SK-N-SH (cell line): ENCODE measurements at regions of chr12 and their contacts with region 1.

Region 1: GRCh38 chr12:104201238-104202001 is 14.2 kb upstream of the TXNRD1 start:
- DNase-seq: peak; percentile 67
- H3K4me3 ChIP-seq: no peak overlapping the region
- H3K27ac ChIP-seq: no peak overlapping the region
- H3K4me1 ChIP-seq: no peaks in the 10 kb centered on the region
- H3K27me3 ChIP-seq: no peaks in the 10 kb centered on the region
- CTCF ChIP-seq: peak; percentile 85
- EP300 ChIP-seq: no peak
- RAD21 ChIP-seq: peak; percentile 94

Region 2: GRCh38 chr12:104286538-104287482 is 85.4 kb after region 1 on chr12:
- CTCF ChIA-PET with region 1: interaction called, 13 read pairs
- POLR2A ChIA-PET with region 1: no interaction called
- DNase-seq: peak; percentile 82
- H3K4me3 ChIP-seq: peak overlapping the region; percentile 74 to 75
- H3K27ac ChIP-seq: peak overlapping the region; percentile 95 to 97
- H3K4me1 ChIP-seq: peaks cover 16 to 17% of the 10 kb centered on the region in 2 experiments; a peak in 3 of 4 replicates
- H3K27me3 ChIP-seq: no peaks in the 10 kb centered on the region
- CTCF ChIP-seq: no peak
- EP300 ChIP-seq: peak in 1 of 2 experiments; percentile 56; a peak in 2 of 4 replicates
- RAD21 ChIP-seq: no peak

Region 3: DNA sequence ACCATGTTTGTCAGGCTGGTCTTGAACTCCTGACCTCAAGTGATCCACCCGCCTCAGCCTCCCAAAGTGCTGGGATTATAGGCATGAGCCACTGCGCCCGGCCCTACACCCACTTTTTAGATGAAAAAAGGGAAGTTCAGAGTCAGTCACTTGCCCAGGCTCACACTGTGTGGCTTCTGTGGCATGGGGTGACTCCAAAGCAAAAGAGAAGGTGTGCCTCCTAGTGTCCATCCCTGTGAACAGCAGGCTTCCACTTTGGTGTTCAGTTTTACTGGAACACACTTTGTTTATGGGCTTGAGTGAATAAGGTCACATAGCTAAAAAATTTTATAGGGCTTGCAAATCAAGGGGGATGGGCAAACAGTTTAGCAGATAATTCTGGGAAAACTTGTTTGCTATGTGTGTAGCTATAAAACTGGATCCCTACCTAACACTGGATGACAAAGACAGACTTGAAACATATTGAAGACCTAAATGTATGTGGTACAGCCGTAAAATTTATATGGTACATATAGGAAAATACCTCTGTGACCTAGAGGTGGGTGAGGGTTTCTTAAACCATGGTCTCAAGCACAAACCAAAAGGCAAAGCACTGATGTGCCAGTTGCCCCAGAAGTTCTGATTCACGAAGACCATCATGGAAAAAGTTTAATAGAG is 157.1 kb after region 1 on chr12:
- CTCF ChIA-PET with region 1: interaction called, 13 read pairs
- POLR2A ChIA-PET with region 1: no interaction called
- DNase-seq: peak; percentile 58
- H3K4me3 ChIP-seq: no peak overlapping the region; a peak in 1 of 4 replicates
- H3K27ac ChIP-seq: no peak overlapping the region
- H3K4me1 ChIP-seq: no peaks in the 10 kb centered on the region
- H3K27me3 ChIP-seq: no peaks in the 10 kb centered on the region
- CTCF ChIP-seq: peak; percentile 68
- EP300 ChIP-seq: no peak
- RAD21 ChIP-seq: peak; percentile 72